ENCODE measurements at regions of chr7 and their contacts with region 1.

Region 1: GRCh38 chr7:94087664-94088352 is 83.7 kb upstream of the BET1 start:
- DNase-seq: peak in 9 of 14 experiments; percentile 4 to 78 (median 22)
- ATAC-seq: peak; percentile 85
- H3K4me3 ChIP-seq: peak overlapping the region; percentile 21
- H3K4me3 Mint-ChIP-seq: peak overlapping the region; percentile 78
- H3K27ac ChIP-seq: no peak overlapping the region
- H3K27ac Mint-ChIP-seq: no peak overlapping the region
- H3K4me1 ChIP-seq: no peaks in the 10 kb centered on the region
- H3K4me1 Mint-ChIP-seq: peaks cover 7% of the 10 kb centered on the region
- H3K27me3 ChIP-seq: peaks cover 5 to 7% of the 10 kb centered on the region in 2 experiments
- H3K27me3 Mint-ChIP-seq: peaks cover 42% of the 10 kb centered on the region
- CTCF ChIP-seq: peak; percentile 72

Region 2: DNA sequence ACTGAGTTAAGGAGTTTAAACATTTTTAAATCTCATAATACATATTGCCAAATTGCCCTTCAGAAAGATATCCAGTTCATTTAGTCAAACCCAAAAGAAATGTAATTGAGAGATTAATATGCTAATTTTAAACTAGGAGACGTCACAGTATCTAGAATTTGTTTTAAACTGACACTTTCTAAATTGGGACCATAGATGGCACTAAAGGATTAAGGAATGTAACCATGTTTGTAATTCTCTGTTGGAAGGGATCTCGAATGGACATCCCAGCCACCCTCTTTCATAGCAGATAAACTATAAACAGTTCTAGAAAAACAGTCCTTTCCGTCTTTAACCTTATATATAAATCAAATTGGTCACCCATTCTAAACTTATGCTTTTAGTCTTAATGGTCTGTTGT is 909.6 kb before region 1 on chr7:
- CTCF ChIA-PET with region 1: no interaction called
- POLR2A ChIA-PET with region 1: no interaction called
- intact Hi-C with region 1: loop called (anchors 5 kb)
- DNase-seq: peak in 2 of 14 experiments; percentile 8 to 20
- ATAC-seq: no peak
- H3K4me3 ChIP-seq: no peak overlapping the region
- H3K4me3 Mint-ChIP-seq: no peak overlapping the region
- H3K27ac ChIP-seq: no peak overlapping the region
- H3K27ac Mint-ChIP-seq: no peak overlapping the region
- H3K4me1 ChIP-seq: no peaks in the 10 kb centered on the region
- H3K4me1 Mint-ChIP-seq: no peaks in the 10 kb centered on the region
- H3K27me3 ChIP-seq: no peaks in the 10 kb centered on the region
- H3K27me3 Mint-ChIP-seq: peaks cover 34% of the 10 kb centered on the region
- CTCF ChIP-seq: peak; percentile 17

Region 3: DNA sequence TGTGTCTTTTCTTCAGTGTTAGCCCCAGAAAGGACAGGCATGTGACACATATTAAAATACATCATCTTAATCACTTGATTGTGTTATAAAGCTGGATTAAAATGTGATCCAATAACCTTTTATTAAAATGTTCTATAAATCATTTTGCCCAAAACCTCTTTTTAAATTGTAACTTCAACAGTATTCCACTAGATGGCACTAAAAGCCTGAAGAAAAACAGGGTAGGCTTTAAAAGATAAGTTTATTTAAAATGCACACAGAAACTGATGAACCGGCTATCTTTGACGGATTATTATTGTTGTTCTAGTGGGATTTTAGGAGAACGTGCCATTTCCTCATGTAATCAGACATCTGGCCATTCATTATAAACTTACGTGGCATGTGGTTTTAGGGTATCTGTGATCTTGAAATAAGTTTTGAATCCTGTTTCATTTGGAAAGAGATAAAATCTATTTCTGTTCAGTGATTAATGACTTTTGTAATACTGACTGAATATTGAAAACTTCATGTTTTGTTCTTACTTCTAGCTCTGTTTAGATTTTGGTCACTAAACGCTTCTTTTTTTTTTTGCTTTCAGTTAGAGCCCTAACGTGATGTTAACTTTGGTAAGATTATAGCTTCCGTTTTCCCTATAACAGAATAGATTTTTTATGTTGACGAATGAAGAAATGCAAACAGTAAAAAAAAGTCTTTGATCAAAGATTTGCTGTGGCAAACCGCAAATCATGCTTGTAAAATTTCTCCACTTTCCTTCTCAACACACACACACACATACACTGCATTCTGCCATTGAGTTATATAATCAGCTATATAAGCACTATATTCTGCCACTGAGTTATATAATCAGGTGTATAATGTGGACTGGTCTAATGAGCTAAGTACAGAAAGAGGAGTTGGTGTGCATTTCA is 842.0 kb before region 1 on chr7:
- CTCF ChIA-PET with region 1: interaction called, 7 read pairs
- POLR2A ChIA-PET with region 1: no interaction called
- intact Hi-C with region 1: loop called (anchors 1 to 2 kb)
- DNase-seq: peak in 3 of 14 experiments; percentile 48 to 55 (median 51)
- ATAC-seq: peak; percentile 55
- H3K4me3 ChIP-seq: peak overlapping the region; percentile 5
- H3K4me3 Mint-ChIP-seq: peak overlapping the region; percentile 79
- H3K27ac ChIP-seq: no peak overlapping the region
- H3K27ac Mint-ChIP-seq: peak overlapping the region; percentile 40
- H3K4me1 ChIP-seq: no peaks in the 10 kb centered on the region
- H3K4me1 Mint-ChIP-seq: peaks cover 26% of the 10 kb centered on the region
- H3K27me3 ChIP-seq: no peaks in the 10 kb centered on the region
- H3K27me3 Mint-ChIP-seq: no peaks in the 10 kb centered on the region
- CTCF ChIP-seq: peak; percentile 90

Region 4: GRCh38 chr7:93442478-93443224 is 645.2 kb before region 1 on chr7:
- CTCF ChIA-PET with region 1: no interaction called
- POLR2A ChIA-PET with region 1: no interaction called
- intact Hi-C with region 1: loop called in 1 of 2 experiments (anchors 5 kb)
- DNase-seq: peak in 8 of 14 experiments; percentile 0 to 46 (median 24)
- ATAC-seq: peak; percentile 44
- H3K4me3 ChIP-seq: no peak overlapping the region
- H3K4me3 Mint-ChIP-seq: no peak overlapping the region
- H3K27ac ChIP-seq: no peak overlapping the region
- H3K27ac Mint-ChIP-seq: no peak overlapping the region
- H3K4me1 ChIP-seq: no peaks in the 10 kb centered on the region
- H3K4me1 Mint-ChIP-seq: no peaks in the 10 kb centered on the region
- H3K27me3 ChIP-seq: no peaks in the 10 kb centered on the region
- H3K27me3 Mint-ChIP-seq: no peaks in the 10 kb centered on the region
- CTCF ChIP-seq: peak; percentile 34

Region 5: GRCh38 chr7:93897680-93898079 is 190.1 kb before region 1 on chr7:
- CTCF ChIA-PET with region 1: no interaction called
- POLR2A ChIA-PET with region 1: no interaction called
- intact Hi-C with region 1: loop called in 1 of 2 experiments (anchors 1 kb)
- DNase-seq: no peak
- ATAC-seq: no peak
- H3K4me3 ChIP-seq: no peak overlapping the region
- H3K4me3 Mint-ChIP-seq: no peak overlapping the region
- H3K27ac ChIP-seq: no peak overlapping the region
- H3K27ac Mint-ChIP-seq: no peak overlapping the region
- H3K4me1 ChIP-seq: no peaks in the 10 kb centered on the region
- H3K4me1 Mint-ChIP-seq: no peaks in the 10 kb centered on the region
- H3K27me3 ChIP-seq: peaks cover 0 to 2% of the 10 kb centered on the region in 2 experiments
- H3K27me3 Mint-ChIP-seq: peaks cover 22% of the 10 kb centered on the region
- CTCF ChIP-seq: no peak

Region 6: DNA sequence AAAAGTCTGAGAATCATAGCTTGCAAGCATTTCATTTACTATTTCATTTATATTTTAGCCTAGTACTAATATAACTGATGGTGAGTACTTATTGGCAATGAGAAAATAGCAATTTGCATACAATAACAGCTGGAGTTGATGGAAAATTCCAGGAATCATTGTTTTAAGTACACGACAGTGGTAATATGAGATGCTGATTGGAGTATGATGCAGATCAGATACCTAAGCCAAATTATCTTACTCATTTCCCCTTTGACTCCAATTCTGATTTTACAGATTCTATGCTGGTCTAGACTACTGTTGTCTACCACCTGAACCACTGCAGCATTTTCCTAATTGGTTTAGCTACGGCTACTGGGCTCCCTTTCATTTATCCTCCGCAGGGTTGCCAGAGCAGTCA is 129.6 kb before region 1 on chr7:
- CTCF ChIA-PET with region 1: no interaction called
- POLR2A ChIA-PET with region 1: no interaction called
- intact Hi-C with region 1: no loop called
- DNase-seq: no peak
- ATAC-seq: no peak
- H3K4me3 ChIP-seq: no peak overlapping the region
- H3K4me3 Mint-ChIP-seq: no peak overlapping the region
- H3K27ac ChIP-seq: no peak overlapping the region
- H3K27ac Mint-ChIP-seq: no peak overlapping the region
- H3K4me1 ChIP-seq: no peaks in the 10 kb centered on the region
- H3K4me1 Mint-ChIP-seq: no peaks in the 10 kb centered on the region
- H3K27me3 ChIP-seq: no peaks in the 10 kb centered on the region
- H3K27me3 Mint-ChIP-seq: no peaks in the 10 kb centered on the region
- CTCF ChIP-seq: no peak

Region 7: GRCh38 chr7:94008537-94008936 is 79.3 kb before region 1 on chr7:
- CTCF ChIA-PET with region 1: no interaction called
- POLR2A ChIA-PET with region 1: no interaction called
- intact Hi-C with region 1: no loop called
- DNase-seq: no peak
- ATAC-seq: no peak
- H3K4me3 ChIP-seq: no peak overlapping the region
- H3K4me3 Mint-ChIP-seq: no peak overlapping the region
- H3K27ac ChIP-seq: no peak overlapping the region
- H3K27ac Mint-ChIP-seq: no peak overlapping the region
- H3K4me1 ChIP-seq: peaks cover 9% of the 10 kb centered on the region
- H3K4me1 Mint-ChIP-seq: peaks cover 16% of the 10 kb centered on the region
- H3K27me3 ChIP-seq: no peaks in the 10 kb centered on the region
- H3K27me3 Mint-ChIP-seq: peaks cover 23% of the 10 kb centered on the region
- CTCF ChIP-seq: no peak

Measured in CD4-positive, alpha-beta T cell (primary cell).